A673 (cell line): ENCODE measurements at regions of chr4 and their contacts with region 1.

Region 1: DNA sequence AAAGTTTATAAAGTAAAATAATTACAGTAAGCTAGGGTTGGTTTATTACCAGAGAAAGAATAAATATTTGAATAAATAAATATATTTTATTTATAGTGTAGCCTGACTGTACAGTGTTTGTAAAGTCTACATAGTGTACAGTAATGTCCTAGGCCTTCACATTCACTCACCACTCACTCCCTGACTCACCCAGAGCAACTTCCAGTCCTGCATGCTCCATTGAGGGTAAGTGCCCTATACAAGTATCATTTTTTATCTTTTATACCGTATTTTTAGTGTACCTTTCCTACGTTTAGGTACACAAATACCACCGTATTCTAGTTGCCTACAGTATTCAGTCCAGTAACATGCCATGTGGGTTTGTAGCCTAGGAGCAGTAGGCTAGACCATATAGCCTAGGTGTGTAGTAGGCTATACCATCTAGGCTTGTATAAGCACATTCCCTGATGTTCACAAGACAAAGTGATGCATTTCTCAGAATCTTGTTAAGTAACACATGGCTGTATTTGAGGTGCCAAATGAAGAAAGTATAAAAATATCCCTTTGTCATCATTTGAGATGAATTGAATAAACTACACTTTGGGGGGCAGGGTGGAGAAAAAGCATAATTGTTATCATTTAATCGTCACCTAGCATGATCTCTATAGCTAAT is 14.7 kb upstream of the KLHL8 start:
- DNase-seq: no peak
- H3K4me3 ChIP-seq: peak overlapping the region; percentile 38
- H3K27ac ChIP-seq: no peak overlapping the region
- H3K4me1 ChIP-seq: no peaks in the 10 kb centered on the region
- H3K27me3 ChIP-seq: no peaks in the 10 kb centered on the region
- CTCF ChIP-seq: no peak

Region 2: DNA sequence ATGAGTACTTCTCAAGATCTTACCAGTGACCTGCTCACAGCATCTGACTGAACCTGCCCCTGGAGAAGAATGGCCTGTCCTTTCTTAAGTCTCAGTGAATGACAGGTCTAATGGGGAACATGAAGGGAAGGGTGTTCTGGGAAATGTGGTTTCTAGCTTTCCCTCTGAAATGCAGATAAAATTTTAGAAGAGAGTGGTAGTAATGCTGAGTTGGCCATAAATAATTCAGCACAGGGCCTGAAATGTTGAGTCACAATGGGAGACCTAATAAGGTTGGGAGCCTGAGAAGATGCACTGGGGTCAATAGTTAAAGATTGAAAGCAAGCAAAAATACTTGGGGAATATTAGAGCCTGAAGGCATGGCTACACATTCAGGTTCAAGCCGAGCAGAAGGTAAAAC is 1975.1 kb before region 1 on chr4:
- CTCF ChIA-PET with region 1: interaction called, 12 read pairs
- POLR2A ChIA-PET with region 1: no interaction called
- intact Hi-C with region 1: no loop called
- DNase-seq: no peak
- H3K4me3 ChIP-seq: no peak overlapping the region
- H3K27ac ChIP-seq: no peak overlapping the region
- H3K4me1 ChIP-seq: no peaks in the 10 kb centered on the region
- H3K27me3 ChIP-seq: no peaks in the 10 kb centered on the region
- CTCF ChIP-seq: no peak

Region 3: DNA sequence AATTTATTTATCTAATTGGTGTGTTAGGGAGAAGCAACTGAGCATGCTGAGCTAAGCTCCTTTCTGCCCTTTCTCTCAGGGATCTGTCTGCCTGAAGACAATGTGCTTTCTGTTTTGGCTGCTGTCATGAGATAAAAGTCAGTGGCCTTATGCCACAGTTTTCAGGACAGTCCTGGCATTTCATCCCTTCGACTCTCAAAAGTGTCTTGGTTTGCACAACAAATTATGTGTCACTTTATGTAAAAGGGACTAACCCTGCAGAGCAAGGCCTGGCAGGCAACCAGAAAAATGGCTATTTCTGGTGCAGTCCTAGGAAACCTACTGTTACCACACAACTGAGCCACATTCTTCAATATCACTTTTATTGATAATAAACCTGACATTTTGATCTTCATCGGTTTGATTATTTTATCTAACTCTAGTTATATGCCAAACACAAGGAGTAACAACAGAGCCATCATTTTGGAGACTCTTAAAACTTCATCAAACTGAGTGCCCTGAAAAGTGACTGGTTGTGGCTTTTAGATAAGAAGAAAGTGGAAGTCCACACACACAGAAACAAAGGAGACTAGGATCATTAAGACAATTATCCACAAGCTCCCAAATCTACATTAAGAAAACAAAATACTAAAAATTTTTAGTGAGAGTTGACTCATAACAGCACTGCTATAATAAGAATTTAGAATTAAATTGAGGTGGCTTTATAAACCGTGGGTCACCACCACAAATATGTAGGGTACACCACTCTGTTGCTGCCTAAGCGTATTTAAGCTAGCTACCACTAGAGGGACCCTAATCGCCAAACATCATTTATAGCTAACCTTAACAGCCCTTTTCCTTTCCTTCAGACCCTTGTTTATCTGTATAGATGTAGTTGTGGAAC is 736.9 kb before region 1 on chr4:
- CTCF ChIA-PET with region 1: no interaction called
- POLR2A ChIA-PET with region 1: no interaction called
- intact Hi-C with region 1: loop called (anchors 10 kb)
- DNase-seq: peak; percentile 77
- H3K4me3 ChIP-seq: no peak overlapping the region
- H3K27ac ChIP-seq: peak overlapping the region; percentile 83
- H3K4me1 ChIP-seq: peaks cover 58% of the 10 kb centered on the region
- H3K27me3 ChIP-seq: no peaks in the 10 kb centered on the region
- CTCF ChIP-seq: peak; percentile 73

Region 4: GRCh38 chr4:86895692-86896488 is 339.3 kb before region 1 on chr4:
- CTCF ChIA-PET with region 1: no interaction called
- POLR2A ChIA-PET with region 1: no interaction called
- intact Hi-C with region 1: loop called (anchors 5 kb)
- DNase-seq: peak; percentile 74
- H3K4me3 ChIP-seq: no peak overlapping the region
- H3K27ac ChIP-seq: no peak overlapping the region
- H3K4me1 ChIP-seq: peaks cover 12% of the 10 kb centered on the region
- H3K27me3 ChIP-seq: no peaks in the 10 kb centered on the region
- CTCF ChIP-seq: peak; percentile 65

Region 5: GRCh38 chr4:86927843-86928395 is 307.2 kb before region 1 on chr4:
- CTCF ChIA-PET with region 1: no interaction called
- POLR2A ChIA-PET with region 1: no interaction called
- intact Hi-C with region 1: loop called (anchors 5 kb)
- DNase-seq: no peak
- H3K4me3 ChIP-seq: no peak overlapping the region
- H3K27ac ChIP-seq: no peak overlapping the region
- H3K4me1 ChIP-seq: peaks cover 9% of the 10 kb centered on the region
- H3K27me3 ChIP-seq: no peaks in the 10 kb centered on the region
- CTCF ChIP-seq: no peak

Region 6: DNA sequence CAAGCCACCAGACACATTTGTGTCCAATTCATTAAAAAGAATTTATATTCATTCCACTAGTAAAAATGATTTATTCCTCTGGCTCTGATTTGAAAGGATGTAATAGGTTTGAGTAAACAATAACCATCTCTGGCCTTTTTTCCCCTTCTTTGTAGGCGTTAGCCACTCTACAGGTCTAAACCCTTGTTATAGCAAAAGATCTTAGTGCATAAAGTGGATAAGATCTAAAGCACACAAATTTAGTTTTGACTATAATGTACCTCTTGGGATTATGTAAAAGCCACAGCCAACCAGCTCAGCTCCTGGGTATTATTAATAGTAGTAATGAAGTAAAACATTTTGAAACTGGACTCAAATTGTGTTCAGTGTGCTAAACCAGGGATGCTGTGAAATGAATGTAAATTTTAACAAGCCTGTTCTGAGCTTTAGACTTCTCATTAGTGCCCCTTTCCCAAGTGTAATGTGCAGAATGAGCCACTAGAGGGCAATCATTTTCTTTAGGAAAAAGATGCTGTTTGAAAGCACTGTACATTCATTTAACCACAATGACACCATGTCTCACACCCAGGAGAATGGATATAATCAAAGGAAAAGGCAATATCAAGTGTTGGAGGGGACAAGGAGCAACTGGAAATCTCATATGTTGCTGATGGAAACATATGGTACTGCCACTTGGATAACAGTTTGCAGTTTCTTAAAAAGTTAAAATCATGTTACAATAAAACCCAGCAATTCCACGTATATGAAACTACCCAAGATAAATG is 84.5 kb before region 1 on chr4:
- CTCF ChIA-PET with region 1: interaction called, 3 read pairs
- POLR2A ChIA-PET with region 1: no interaction called
- intact Hi-C with region 1: loop called (anchors 2 kb)
- DNase-seq: peak; percentile 74
- H3K4me3 ChIP-seq: no peak overlapping the region
- H3K27ac ChIP-seq: no peak overlapping the region
- H3K4me1 ChIP-seq: peaks cover 8% of the 10 kb centered on the region
- H3K27me3 ChIP-seq: no peaks in the 10 kb centered on the region
- CTCF ChIP-seq: peak; percentile 70